ENCODE measurements at regions of chr4 and their contacts with region 1.

Region 1: GRCh38 chr4:83503974-83504373 is 19.1 kb upstream of the ABRAXAS1 start:
- DNase-seq: no peak
- H3K4me3 Mint-ChIP-seq: no peak overlapping the region
- H3K27ac Mint-ChIP-seq: no peak overlapping the region
- H3K4me1 Mint-ChIP-seq: peaks cover 5% of the 10 kb centered on the region
- H3K27me3 Mint-ChIP-seq: no peaks in the 10 kb centered on the region

Region 2: GRCh38 chr4:83582289-83582769 is 78.4 kb after region 1 on chr4:
- intact Hi-C with region 1: no loop called
- DNase-seq: no peak
- H3K4me3 Mint-ChIP-seq: no peak overlapping the region
- H3K27ac Mint-ChIP-seq: no peak overlapping the region
- H3K4me1 Mint-ChIP-seq: no peaks in the 10 kb centered on the region
- H3K27me3 Mint-ChIP-seq: peaks cover 7% of the 10 kb centered on the region

Region 3: GRCh38 chr4:84258905-84259830 is 755.2 kb after region 1 on chr4:
- intact Hi-C with region 1: loop called (anchors 10 kb)
- DNase-seq: no peak
- H3K4me3 Mint-ChIP-seq: no peak overlapping the region
- H3K27ac Mint-ChIP-seq: no peak overlapping the region
- H3K4me1 Mint-ChIP-seq: no peaks in the 10 kb centered on the region
- H3K27me3 Mint-ChIP-seq: no peaks in the 10 kb centered on the region